GM12878 (cell line): ENCODE measurements at regions of chr7 and their contacts with region 1.

Region 1: GRCh38 chr7:140326116-140326928 is 72.0 kb downstream of the SLC37A3 start:
- DNase-seq: no peak
- ATAC-seq: peak; percentile 80
- H3K4me3 ChIP-seq: no peak overlapping the region
- H3K27ac ChIP-seq: no peak overlapping the region
- H3K4me1 ChIP-seq: no peaks in the 10 kb centered on the region
- H3K27me3 ChIP-seq: peaks cover 0 to 1% of the 10 kb centered on the region in 2 experiments; a peak in 1 of 4 replicates
- CTCF ChIP-seq: peak; percentile 62 to 68 (median 67); a peak in 5 of 6 replicates
- EP300 ChIP-seq: no peak
- POLR2A ChIP-seq: no peak
- RAD21 ChIP-seq: peak; percentile 84

Region 2: DNA sequence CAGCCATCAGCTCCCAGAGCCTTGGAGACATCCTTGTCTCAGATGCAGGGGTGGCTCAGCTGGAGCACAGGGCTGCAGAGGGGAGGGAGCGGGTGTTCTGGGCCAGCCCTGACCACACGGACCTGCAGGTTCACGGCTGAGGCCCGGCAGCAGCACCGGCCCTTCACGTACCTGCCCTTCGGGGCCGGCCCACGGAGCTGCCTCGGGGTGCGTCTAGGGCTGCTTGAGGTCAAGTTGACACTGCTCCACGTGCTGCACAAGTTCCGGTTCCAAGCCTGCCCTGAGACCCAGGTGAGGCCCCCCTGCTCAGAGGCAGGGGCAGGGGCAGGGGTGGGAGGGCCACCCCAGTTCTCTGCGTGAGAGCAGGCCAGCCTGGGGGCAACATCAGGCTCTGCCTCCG is 308.8 kb before region 1 on chr7:
- CTCF ChIA-PET with region 1: no interaction called
- POLR2A ChIA-PET with region 1: no interaction called
- RAD21 ChIA-PET with region 1: no interaction called
- SMC1A ChIA-PET with region 1: no interaction called
- in situ Hi-C with region 1: no loop called
- intact Hi-C with region 1: loop called (anchors 5 kb)
- DNase-seq: no peak
- ATAC-seq: no peak
- H3K4me3 ChIP-seq: no peak overlapping the region
- H3K27ac ChIP-seq: no peak overlapping the region
- H3K4me1 ChIP-seq: no peaks in the 10 kb centered on the region
- H3K27me3 ChIP-seq: no peaks in the 10 kb centered on the region; a peak in 1 of 4 replicates
- CTCF ChIP-seq: no peak
- EP300 ChIP-seq: no peak
- POLR2A ChIP-seq: no peak
- RAD21 ChIP-seq: no peak

Region 3: DNA sequence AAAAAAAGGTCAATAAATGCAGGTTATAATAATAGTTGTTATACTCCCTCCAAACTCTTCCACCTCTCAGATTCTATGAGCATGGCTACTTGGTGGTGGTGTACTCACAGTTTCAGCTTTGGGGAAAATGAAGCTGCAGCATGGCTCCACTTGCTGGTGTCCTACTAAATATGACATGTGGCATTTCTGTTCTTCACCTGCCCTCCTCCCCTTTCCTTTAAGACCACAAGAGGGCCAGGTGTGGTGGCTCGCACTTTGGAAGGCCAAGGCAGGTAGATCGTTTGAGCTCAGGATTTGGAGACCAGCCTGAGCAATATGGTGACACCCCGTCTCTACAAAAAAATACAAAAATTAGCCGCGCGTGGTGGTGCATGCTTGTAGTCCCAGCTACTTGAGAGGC is 29.1 kb before region 1 on chr7:
- CTCF ChIA-PET with region 1: no interaction called
- POLR2A ChIA-PET with region 1: no interaction called
- RAD21 ChIA-PET with region 1: no interaction called
- SMC1A ChIA-PET with region 1: no interaction called
- in situ Hi-C with region 1: no loop called
- intact Hi-C with region 1: no loop called
- DNase-seq: no peak
- ATAC-seq: no peak
- H3K4me3 ChIP-seq: no peak overlapping the region
- H3K27ac ChIP-seq: no peak overlapping the region
- H3K4me1 ChIP-seq: no peaks in the 10 kb centered on the region
- H3K27me3 ChIP-seq: no peaks in the 10 kb centered on the region; a peak in 2 of 4 replicates
- CTCF ChIP-seq: no peak
- EP300 ChIP-seq: no peak
- POLR2A ChIP-seq: no peak
- RAD21 ChIP-seq: no peak